Cardiac septum (tissue), 1 donor: ENCODE measurements at regions of chr2 and their contacts with region 1.

Region 1: DNA sequence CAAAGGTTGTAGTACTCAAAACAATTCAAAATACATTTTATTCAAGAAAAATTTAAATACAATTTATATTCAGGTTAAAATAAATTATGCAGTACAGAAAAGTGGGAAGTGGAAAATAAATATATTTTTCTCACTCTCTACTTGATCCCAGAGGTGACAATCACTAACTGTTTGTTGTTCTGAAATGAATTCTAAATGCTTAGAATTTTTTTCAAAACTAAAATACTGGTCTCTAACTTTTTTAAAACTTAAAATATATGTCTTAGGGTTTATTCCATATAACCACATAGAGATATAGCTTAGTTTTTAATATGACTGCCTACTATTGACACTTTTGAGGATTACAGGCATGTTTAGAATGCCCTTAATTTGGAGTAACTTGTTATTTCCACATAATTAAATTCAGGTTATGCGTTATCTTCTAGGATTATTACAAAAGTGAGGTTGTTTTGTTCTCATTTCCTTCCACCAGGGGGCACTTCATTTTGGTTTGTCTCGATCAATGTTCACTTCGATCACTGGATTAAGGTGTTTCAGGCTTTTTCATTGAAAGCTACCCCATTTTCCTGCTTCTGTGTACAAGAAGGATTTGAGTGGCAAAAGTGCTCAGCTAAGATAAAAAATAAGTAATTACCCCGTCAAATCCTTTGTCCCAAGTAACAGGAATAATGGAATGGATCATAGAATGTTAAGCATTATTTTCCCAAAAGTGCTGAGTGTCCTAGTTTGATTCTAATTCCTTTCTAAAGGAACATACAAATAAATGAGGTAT is 27.1 kb upstream of the TFPI start:
- DNase-seq: no peak

Region 2: DNA sequence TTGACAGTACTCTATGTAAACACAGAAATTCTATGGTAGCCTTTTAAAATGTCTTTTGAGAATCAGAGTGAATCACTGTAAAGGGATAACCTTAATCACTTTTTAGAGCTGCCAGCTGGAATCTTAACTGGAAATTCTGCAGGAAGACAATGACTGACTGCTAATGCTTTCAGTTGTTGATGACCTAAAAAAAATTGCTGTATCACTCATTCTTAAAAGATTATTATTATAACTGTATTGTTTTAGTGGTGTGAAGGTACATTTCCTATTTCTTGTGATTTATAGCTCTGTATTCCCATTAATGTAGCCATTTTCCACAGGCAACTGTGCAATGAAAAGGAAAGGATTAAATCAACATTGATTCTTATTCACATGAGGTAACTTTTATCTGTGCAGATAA is 393.8 kb before region 1 on chr2:
- intact Hi-C with region 1: no loop called
- DNase-seq: no peak

Region 3: DNA sequence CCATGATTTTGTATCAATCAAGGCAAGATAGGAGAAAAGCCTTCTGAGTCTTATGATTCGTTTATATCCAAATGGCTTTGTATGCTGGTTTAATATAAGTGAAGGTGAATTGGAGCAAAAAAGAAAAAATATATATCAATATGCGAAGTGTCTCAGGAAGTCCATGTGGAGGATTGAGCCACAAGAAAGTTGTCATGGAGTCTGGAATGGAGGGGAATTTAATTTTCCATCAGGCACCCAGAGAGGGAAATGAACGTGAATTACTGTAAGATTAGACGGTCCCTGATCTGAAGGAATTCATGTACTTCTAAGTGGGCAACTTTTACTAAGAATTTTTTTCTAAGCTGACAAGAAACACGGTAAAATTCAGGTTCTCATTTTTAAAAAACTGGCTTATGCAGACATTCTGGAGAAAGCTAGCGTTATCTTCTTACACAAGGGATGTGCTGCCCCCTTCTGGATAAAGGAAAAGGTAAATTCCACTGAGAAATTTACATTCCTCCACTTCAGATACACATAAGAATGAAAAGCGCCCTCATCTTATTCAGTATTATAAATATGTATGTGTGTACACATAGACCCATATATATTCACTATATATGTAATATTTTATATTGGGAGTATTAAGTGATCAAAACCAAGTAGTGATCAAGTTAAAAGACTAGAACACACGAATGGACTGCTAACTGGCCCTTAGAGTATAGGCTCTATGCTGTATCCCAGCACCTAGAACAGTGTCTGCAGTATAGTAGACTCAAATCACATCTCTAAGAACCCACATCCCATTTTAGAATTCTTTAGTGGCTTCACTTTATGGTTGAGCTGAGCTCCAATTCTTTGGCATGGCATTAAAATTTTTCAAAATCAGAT is 261.9 kb after region 1 on chr2:
- intact Hi-C with region 1: loop called (anchors 5 kb)
- DNase-seq: no peak

Region 4: GRCh38 chr2:188512456-188512855 is 931.1 kb after region 1 on chr2:
- intact Hi-C with region 1: loop called (anchors 5 kb)
- DNase-seq: no peak